ENCODE measurements at regions of chr22 and their contacts with region 1.

Region 1: GRCh38 chr22:34812631-34813030 is 253.3 kb upstream of the ISX start:
- DNase-seq: no peak

Region 2: GRCh38 chr22:34769361-34769760 is 43.3 kb before region 1 on chr22:
- intact Hi-C with region 1: loop called in 1 of 2 experiments (anchors 2 kb)
- DNase-seq: no peak

Region 3: GRCh38 chr22:34886812-34887211 is 74.2 kb after region 1 on chr22:
- intact Hi-C with region 1: no loop called
- DNase-seq: no peak

Region 4: GRCh38 chr22:35212009-35212408 is 399.4 kb after region 1 on chr22:
- intact Hi-C with region 1: no loop called
- DNase-seq: no peak